ENCODE measurements at regions of chr11 and their contacts with region 1.

Region 1: DNA sequence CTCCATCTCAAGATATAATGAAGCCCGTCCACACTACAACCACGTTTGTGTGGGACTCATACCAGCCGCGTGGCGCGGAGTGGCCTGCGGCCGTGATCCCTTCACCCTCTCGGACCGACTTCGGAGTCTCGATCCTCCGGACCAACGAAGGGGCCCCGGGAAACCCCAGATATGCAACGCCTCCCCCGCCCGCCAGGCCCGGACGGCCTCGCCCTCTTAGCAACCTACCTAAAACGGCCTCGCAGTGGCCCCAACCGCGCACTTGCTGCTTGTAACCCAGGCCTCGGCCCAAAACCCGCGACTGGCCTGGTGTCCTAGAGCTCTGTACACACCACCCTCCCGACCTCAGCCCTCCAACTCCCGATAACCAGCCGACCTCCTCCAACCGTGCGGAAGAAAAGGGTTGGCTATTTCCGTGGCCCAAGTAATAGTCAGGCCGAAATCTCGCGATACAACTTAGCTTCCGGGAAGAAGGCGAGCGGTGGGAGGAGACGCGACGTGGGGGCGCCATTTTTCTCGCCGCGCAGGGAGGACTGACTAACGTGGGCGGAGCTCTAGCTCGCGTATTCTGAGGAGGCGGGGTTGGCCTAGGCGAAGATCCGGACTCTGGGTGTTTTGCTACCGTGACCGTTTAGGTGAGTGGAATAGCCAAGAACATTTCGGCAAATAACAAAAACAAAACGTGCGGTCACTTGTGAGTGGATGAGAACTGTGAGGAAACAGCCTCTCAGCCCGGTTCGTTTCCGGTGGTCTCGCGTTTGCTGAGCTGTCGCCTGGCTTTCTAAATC is at the starts of genes C11orf54 and TAF1D:
- DNase-seq: peak; percentile 96 to 98
- H3K4me3 ChIP-seq: peak within 1 kb of the TSS; percentile 93
- H3K4me1 ChIP-seq: peaks cover 40% of the 10 kb centered on the region
- H3K27me3 ChIP-seq: no peaks in the 10 kb centered on the region

Region 2: DNA sequence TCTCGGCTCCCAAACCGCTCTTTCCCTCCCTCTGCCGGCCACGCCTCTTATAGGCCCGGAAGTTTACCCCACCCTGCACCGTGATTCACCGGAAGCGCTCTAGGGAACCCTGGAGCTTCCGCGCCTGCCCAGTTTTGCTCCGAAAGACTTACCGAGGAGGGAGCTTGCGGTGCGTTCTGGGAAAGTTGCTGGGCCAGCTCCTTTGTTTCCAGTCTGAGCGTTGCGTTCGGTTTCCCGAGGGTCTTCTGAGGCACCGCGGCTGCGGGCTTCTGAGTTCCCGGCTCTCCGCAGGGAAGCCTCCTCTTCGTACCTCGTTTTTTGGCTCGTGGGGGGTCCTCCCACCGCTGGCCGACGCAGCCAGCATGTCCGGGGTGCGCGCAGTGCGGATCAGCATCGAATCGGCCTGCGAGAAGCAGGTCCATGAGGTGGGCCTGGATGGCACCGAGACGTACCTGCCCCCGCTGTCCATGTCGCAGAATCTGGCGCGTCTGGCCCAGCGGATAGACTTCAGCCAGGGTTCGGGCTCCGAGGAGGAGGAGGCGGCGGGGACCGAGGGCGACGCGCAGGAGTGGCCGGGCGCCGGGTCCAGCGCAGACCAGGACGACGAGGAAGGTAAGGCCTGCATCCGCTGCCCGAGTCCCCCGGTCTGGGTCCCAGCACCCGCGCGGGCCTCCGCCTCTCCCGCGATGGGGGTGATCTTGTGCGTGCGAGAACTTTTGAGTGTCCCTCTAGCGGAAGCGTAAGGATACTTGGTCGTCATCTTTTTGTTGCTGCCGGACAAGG is 43.1 kb after region 1 on chr11 and contains the start of gene MED17:
- in situ Hi-C with region 1: loop called (anchors 5 kb)
- DNase-seq: peak; percentile 93 to 96
- H3K4me3 ChIP-seq: peak within 1 kb of the TSS; percentile 78
- H3K4me1 ChIP-seq: peaks cover 6% of the 10 kb centered on the region; the same call in 1 of the 2 replicates
- H3K27me3 ChIP-seq: no peaks in the 10 kb centered on the region

Region 3: DNA sequence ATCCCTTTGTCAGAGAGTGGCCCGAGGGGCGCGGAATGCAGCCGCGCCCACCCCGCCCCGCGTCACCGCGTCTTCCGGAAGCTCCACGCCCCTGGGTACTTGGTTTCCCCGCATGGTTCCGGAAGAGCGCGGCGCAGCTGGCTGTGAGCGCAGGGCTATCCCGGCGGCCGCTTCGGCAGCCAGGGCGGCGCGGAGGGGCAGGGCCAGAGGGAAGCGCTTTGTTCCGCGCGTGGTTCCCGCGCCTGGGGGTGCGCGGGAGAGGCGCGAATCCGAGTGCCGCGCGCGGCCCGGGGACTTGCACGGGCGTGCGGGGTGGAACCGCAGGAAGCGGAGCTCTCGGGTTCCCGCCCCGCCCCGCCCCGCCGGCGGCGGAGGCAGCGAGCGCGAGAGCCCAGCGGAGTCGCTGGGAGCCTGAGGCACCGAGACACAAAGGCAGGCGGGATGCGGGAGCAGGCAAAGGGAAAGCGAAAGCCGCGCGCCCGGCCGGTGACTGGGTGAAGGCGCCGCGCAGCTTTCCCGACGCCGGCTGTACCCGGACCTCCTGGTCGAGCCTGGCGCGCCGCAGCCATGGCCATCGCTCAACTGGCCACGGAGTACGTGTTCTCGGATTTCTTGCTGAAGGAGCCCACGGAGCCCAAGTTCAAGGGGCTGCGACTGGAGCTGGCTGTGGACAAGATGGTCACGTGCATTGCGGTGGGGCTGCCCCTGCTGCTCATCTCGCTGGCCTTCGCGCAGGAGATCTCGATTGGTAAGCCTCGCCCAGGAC is 387.6 kb after region 1 on chr11 and contains the start of gene PANX1:
- in situ Hi-C with region 1: loop called (anchors 25 kb)
- DNase-seq: peak; percentile 82 to 89
- H3K4me3 ChIP-seq: peak within 1 kb of the TSS; percentile 62
- H3K4me1 ChIP-seq: peaks cover 9% of the 10 kb centered on the region
- H3K27me3 ChIP-seq: no peaks in the 10 kb centered on the region